Gastrocnemius medialis (tissue), 4 donors: ENCODE measurements at regions of chr22 and their contacts with region 1.

Region 1: GRCh38 chr22:39520054-39520891 is at the start of gene ATF4:
- DNase-seq: peak; percentile 97 to 99
- ATAC-seq: peak; percentile 77 to 86
- H3K4me3 ChIP-seq: peak within 1 kb of the TSS; percentile 88 to 100 (median 99)
- H3K27ac ChIP-seq: peak within 1 kb of the TSS; percentile 95 to 100 (median 100)
- H3K4me1 ChIP-seq: peaks cover 50 to 53% of the 10 kb centered on the region in 2 donors
- H3K27me3 ChIP-seq: no peaks in the 10 kb centered on the region
- CTCF ChIP-seq: peak in 2 of 5 experiments; percentile 13 to 33
- POLR2A ChIP-seq: peak; percentile 98
- total RNA-seq, gene ATF4: 480 to 666 (median 533) TPM

Region 2: GRCh38 chr22:37608477-37609239 is 1911.6 kb before region 1 on chr22 and contains the start of gene GGA1:
- in situ Hi-C with region 1: no loop called
- intact Hi-C with region 1: loop called (anchors 10 kb)
- DNase-seq: peak; percentile 91 to 93
- ATAC-seq: peak; percentile 92 to 96
- H3K4me3 ChIP-seq: peak within 1 kb of the TSS; percentile 88 to 98 (median 92)
- H3K27ac ChIP-seq: peak within 1 kb of the TSS; percentile 90 to 98 (median 95)
- H3K4me1 ChIP-seq: peaks cover 28 to 34% of the 10 kb centered on the region in 2 donors
- H3K27me3 ChIP-seq: no peaks in the 10 kb centered on the region
- CTCF ChIP-seq: no peak
- POLR2A ChIP-seq: peak in 1 of 2 donors; percentile 30
- total RNA-seq, gene GGA1: 39.0 to 48.8 (median 45.0) TPM

Region 3: GRCh38 chr22:39152511-39153219 is 367.6 kb before region 1 on chr22 and contains the start of gene CBX7:
- in situ Hi-C with region 1: loop called in 2 of 4 experiments (anchors 25 kb)
- intact Hi-C with region 1: no loop called
- DNase-seq: peak; percentile 90 to 95
- ATAC-seq: peak; percentile 79 to 87
- H3K4me3 ChIP-seq: peak within 1 kb of the TSS; percentile 85 to 98 (median 97)
- H3K27ac ChIP-seq: peak within 1 kb of the TSS; percentile 94 to 99 (median 98)
- H3K4me1 ChIP-seq: peaks cover 29 to 31% of the 10 kb centered on the region in 2 donors
- H3K27me3 ChIP-seq: no peaks in the 10 kb centered on the region
- CTCF ChIP-seq: no peak
- POLR2A ChIP-seq: peak; percentile 87 to 96
- total RNA-seq, gene CBX7: 52.4 to 78.1 (median 62.3) TPM

Region 4: DNA sequence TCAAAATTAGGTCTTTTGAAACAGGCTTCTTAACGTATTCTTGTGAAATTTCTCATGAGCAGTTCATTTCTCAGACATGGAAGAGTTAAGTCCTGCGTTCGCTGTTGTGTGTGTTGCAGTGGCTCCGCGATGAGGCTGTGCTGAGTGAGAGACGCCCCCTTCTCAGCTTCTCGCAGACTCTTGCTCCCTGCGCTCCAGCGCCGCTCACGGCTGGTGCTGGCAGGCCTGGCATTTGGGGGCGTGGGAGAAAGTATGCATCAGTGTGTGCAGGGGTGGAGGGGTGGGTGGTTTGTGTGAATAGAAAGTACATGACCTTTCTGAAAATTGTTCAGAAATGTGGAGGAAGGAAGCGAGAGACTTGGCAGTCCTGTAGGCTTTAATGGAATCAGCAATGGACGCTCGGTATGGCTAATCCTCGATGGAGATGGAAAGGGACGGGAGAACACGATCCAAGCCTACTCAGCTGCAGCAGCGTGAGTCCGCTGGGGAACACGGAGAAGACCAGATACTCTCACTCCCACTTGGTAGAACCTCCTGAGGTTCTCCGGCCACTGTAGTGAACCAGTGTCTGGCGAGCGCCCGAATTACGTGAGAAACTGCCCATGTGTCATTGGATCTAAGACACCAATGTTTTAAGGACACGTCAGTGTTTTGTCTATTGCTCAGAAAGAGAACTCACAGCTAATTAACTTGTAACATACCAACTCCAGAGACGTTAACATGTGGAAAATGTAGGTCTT is 114.8 kb before region 1 on chr22:
- in situ Hi-C with region 1: loop called in 1 of 4 experiments (anchors 10 kb)
- intact Hi-C with region 1: no loop called
- DNase-seq: no peak
- ATAC-seq: peak in 1 of 2 donors; percentile 21
- H3K4me3 ChIP-seq: no peak overlapping the region
- H3K27ac ChIP-seq: peak overlapping the region in 1 of 4 donors; percentile 38
- H3K4me1 ChIP-seq: peaks cover 27 to 29% of the 10 kb centered on the region in 2 donors
- H3K27me3 ChIP-seq: no peaks in the 10 kb centered on the region
- CTCF ChIP-seq: no peak
- POLR2A ChIP-seq: no peak

Region 5: GRCh38 chr22:40276996-40277823 is 756.9 kb after region 1 on chr22:
- in situ Hi-C with region 1: no loop called
- intact Hi-C with region 1: loop called (anchors 10 kb)
- DNase-seq: peak; percentile 78 to 88
- ATAC-seq: peak; percentile 96 to 97
- H3K4me3 ChIP-seq: peak overlapping the region; percentile 43 to 57 (median 51)
- H3K27ac ChIP-seq: peak overlapping the region; percentile 86 to 92 (median 88)
- H3K4me1 ChIP-seq: peaks cover 9 to 34% of the 10 kb centered on the region in 2 donors
- H3K27me3 ChIP-seq: no peaks in the 10 kb centered on the region
- CTCF ChIP-seq: no peak
- POLR2A ChIP-seq: peak; percentile 76 to 93

Region 6: GRCh38 chr22:41381329-41382097 is 1861.2 kb after region 1 on chr22 and contains the start of gene TEF:
- in situ Hi-C with region 1: no loop called
- intact Hi-C with region 1: loop called (anchors 5 kb)
- DNase-seq: peak; percentile 99 to 100
- ATAC-seq: peak; percentile 75
- H3K4me3 ChIP-seq: peak within 1 kb of the TSS; percentile 73 to 94 (median 86)
- H3K27ac ChIP-seq: peak within 1 kb of the TSS; percentile 96 to 100 (median 100)
- H3K4me1 ChIP-seq: peaks cover 23 to 25% of the 10 kb centered on the region in 2 donors
- H3K27me3 ChIP-seq: no peaks in the 10 kb centered on the region
- CTCF ChIP-seq: no peak
- POLR2A ChIP-seq: peak; percentile 82 to 84
- total RNA-seq, gene TEF: 15.6 to 39.8 (median 19.5) TPM